Activated CD4-positive, alpha-beta T cell treated with anti-CD3 and anti-CD28 coated beads for 36 hours (primary cell): ENCODE measurements at regions of chr12 and their contacts with region 1.

Region 1: DNA sequence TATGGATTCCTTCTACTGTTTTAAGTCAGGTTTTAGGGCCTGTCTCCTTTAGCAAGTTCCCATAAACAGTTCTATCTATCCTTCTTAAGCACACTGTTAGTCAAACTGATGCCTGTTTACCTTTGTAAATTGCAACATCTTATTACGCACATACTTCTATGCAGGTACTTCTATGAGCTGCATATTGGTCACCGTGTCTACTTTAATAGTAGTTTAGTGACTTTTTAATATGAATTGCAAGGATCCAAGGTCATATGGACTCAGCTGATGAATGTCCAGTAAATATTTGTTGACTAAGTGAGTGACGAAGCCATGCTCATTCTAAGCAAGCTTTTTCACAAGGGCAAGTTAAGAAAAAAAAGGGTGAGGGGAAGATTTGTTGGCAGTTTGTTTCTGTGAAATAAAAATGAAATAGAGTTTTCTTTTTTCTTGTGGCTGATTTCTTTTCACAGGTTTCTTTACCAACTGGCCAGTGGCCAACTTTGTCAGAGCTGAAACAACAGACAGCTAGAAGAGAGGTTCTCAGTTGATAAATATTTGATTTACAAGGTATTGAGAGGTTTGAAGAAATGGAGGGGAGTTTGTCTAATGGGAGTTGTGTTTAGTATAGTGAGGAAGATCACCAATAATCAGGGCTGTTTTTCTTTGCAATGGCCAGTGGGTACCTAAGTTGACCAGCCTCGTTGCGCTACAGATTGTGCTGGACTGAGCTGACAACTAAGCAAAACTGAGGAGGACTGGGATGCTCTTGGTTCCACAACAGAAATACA is 141.1 kb downstream of the SLC15A5 start:
- DNase-seq: no peak
- ATAC-seq: no peak
- H3K4me3 Mint-ChIP-seq: no peak overlapping the region
- H3K27ac Mint-ChIP-seq: no peak overlapping the region
- H3K4me1 Mint-ChIP-seq: no peaks in the 10 kb centered on the region
- H3K27me3 Mint-ChIP-seq: no peaks in the 10 kb centered on the region

Region 2: DNA sequence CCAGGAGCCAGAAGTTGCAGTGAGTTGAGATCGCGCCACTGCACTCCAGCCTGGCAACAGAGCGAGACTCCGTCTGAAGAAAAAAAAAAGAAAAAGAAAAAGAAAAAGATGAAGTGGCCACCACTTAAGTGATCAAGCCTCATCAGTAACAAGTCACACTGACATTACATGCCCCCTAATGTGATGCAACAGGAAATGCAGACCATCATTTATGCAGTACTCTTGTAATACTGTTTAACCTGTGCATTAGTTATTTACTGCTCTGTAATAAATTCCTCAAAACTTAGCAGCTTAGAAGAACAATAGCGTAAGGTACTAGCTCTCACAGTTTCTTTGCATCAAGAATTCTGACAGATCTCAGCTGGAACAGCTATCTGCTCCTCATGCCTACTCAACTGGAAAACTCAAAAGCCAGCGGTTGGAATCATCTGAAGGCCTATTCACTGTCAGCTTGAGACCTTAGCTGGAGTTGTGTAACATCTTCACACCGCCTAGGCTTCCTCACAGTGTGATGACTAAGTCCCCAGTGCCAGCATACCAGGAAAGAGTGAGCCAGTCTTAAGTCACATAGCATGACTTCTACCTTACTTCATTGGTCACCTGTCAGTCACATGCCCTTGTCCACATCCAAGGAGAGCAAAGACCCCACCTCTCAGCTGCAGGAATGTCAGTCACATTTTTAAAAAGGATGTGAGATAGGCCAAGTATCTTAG is 378.7 kb before region 1 on chr12:
- CTCF ChIA-PET with region 1: no interaction called
- POLR2A ChIA-PET with region 1: no interaction called
- intact Hi-C with region 1: no loop called
- DNase-seq: peak; percentile 27
- ATAC-seq: peak; percentile 93
- H3K4me3 Mint-ChIP-seq: no peak overlapping the region
- H3K27ac Mint-ChIP-seq: no peak overlapping the region
- H3K4me1 Mint-ChIP-seq: no peaks in the 10 kb centered on the region
- H3K27me3 Mint-ChIP-seq: peaks cover 25% of the 10 kb centered on the region

Region 3: DNA sequence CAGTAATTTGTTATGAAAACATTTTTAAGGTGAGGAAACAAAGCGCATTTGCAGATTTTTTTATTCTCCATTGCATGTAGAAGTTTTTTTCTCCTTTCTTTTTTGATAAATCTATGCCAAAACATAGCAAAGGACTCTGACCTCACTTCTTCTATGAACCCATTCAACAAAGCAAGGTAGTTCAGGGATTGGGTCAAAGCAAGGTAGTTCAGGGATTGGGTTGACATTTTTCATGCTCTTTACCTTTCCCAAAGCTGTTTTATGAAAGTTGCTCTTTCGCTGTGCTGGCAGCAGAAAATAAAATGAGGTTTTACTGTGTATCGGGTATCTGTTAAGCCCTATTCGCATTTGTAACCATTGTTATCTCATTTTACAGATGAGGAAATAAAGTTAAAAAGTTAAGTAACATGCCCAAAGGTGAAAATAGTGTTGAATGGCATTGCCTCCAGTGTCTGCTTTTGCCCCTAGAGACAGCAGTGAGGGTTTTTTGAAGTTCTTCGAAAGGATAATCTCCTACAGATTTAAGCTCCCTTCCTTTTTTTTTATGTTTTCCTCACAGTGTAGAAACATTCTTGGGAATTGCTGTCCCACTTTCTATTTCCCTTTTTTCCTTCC is 243.7 kb before region 1 on chr12:
- CTCF ChIA-PET with region 1: no interaction called
- POLR2A ChIA-PET with region 1: no interaction called
- intact Hi-C with region 1: no loop called
- DNase-seq: no peak
- ATAC-seq: no peak
- H3K4me3 Mint-ChIP-seq: no peak overlapping the region
- H3K27ac Mint-ChIP-seq: no peak overlapping the region
- H3K4me1 Mint-ChIP-seq: peaks cover 17% of the 10 kb centered on the region
- H3K27me3 Mint-ChIP-seq: no peaks in the 10 kb centered on the region

Region 4: DNA sequence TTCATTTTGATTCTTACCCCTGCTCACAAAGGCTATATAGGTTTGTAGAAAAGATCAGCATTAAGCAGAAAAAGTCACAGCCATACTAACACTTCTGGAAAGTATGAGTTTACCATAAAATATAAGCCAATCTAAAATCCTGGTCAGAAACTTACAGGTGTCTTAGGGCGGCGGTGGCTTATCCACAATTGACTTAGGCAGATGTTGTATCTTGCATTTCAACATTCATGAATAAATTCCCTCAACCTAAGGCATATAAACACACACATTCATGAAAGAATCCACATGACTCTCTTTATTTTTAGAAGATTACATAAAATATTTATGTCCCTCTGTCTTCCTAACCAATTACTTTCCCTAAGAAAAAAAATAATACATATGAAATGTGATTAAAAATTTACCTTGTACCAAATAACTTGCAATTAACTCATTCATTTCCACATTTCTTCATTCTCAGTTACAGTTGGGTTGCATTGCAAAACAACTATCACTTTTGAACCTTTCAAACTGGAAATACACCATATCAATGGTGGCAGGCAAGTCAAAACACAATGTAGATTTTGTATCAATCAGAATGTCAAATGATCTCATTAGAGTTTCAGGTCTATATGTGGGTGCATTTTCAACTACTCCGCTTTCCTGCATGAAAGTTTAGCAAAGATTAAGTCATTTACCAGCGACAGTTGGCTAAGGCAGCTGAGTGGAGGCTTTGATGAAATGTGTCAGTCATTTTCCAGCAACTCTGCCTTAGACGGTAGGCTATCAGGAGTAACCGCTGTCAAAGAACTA is 16.7 kb after region 1 on chr12:
- CTCF ChIA-PET with region 1: no interaction called
- POLR2A ChIA-PET with region 1: no interaction called
- intact Hi-C with region 1: loop called in 1 of 2 experiments (anchors 2 kb)
- DNase-seq: no peak
- ATAC-seq: no peak
- H3K4me3 Mint-ChIP-seq: no peak overlapping the region
- H3K27ac Mint-ChIP-seq: no peak overlapping the region
- H3K4me1 Mint-ChIP-seq: no peaks in the 10 kb centered on the region
- H3K27me3 Mint-ChIP-seq: no peaks in the 10 kb centered on the region